ENCODE measurements at regions of chr5 and their contacts with region 1.

Region 1: GRCh38 chr5:110441035-110441434 is 285.4 kb downstream of the TMEM232 start:
- DNase-seq: no peak
- ATAC-seq: peak in 1 of 2 donors; percentile 66
- H3K4me3 ChIP-seq: no peak overlapping the region
- H3K27ac ChIP-seq: no peak overlapping the region
- H3K4me1 ChIP-seq: peaks cover 7 to 12% of the 10 kb centered on the region in 2 donors
- H3K27me3 ChIP-seq: no peaks in the 10 kb centered on the region
- CTCF ChIP-seq: peak in 2 of 5 experiments; percentile 9 to 40
- POLR2A ChIP-seq: no peak

Region 2: GRCh38 chr5:110590187-110590586 is 149.2 kb after region 1 on chr5:
- in situ Hi-C with region 1: no loop called
- intact Hi-C with region 1: loop called (anchors 1 kb)
- DNase-seq: no peak
- ATAC-seq: no peak
- H3K4me3 ChIP-seq: no peak overlapping the region
- H3K27ac ChIP-seq: no peak overlapping the region
- H3K4me1 ChIP-seq: no peaks in the 10 kb centered on the region
- H3K27me3 ChIP-seq: no peaks in the 10 kb centered on the region
- CTCF ChIP-seq: peak in 2 of 5 experiments; percentile 25 to 50
- POLR2A ChIP-seq: no peak

Region 3: DNA sequence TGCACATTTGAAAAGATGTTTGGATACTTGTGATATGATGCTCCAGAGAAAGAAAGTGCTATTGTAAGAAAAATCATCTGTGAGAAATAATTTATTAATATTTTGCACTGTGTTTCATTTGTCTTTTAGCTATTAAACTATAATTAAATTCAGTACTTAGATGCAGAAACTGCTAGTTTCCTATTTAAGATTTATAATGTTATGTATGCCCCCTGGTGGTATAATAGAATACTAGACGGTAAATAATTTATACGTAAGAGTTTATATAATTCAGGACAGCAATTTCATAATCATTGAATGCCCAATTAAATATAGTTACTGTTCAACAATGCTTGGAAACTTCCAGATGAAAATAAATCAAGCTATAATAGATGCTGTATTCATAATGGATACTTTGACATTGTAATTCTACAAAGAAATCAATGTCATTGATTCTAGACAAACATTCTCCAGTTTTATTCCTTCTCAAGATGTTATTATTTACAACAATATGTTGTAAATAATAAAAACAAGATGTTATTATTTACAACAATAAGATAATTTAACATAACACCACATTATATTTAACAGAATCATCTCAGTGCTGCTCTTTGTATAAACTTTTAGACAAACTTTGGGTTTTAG is 184.5 kb after region 1 on chr5:
- in situ Hi-C with region 1: loop called in 1 of 4 experiments (anchors 25 kb)
- intact Hi-C with region 1: loop called (anchors 2 kb)
- DNase-seq: no peak
- ATAC-seq: no peak
- H3K4me3 ChIP-seq: no peak overlapping the region
- H3K27ac ChIP-seq: no peak overlapping the region
- H3K4me1 ChIP-seq: no peaks in the 10 kb centered on the region
- H3K27me3 ChIP-seq: no peaks in the 10 kb centered on the region
- CTCF ChIP-seq: peak; percentile 14 to 51 (median 23)
- POLR2A ChIP-seq: no peak

Measured in gastrocnemius medialis (tissue), 4 donors.